Activated CD4-positive, alpha-beta memory T cell treated with anti-CD3 and anti-CD28 coated beads for 36 hours (primary cell): ENCODE measurements at regions of chr2 and their contacts with region 1.

Region 1: DNA sequence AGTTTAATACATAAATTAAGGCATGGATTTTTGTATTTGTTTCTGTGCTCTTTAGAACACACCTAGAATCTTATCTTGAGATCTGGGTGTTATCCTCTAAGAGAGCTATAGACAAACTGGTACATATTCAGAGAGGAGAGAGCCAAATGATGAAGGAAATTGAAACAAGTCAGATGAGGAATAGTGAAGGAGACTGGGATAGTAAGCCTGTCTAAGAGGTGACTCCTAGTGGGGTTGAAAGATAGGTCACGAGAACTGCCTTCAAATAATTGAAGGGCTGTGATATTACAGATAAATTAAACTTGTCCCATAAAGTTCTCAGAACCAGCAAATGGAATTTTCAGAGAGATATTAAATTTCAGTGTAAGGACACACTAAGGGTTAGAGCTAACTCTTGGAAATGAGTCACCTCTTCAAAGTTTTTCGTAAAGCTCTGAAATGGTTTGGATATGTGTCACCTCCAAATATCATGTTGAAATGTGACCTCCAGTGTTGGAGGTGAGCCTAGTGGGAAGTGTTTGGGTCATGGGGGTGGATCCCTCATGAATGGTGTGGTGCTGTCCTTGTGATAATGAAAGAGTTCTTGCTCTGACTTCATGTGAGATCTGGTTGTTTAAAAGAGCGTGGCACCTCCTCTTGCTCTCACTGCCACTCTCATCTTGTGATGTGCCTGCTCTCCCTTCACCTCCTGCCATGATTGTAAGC is 87.2 kb downstream of the BABAM2 start:
- DNase-seq: peak; percentile 75
- H3K4me3 Mint-ChIP-seq: peak overlapping the region; percentile 30
- H3K27ac Mint-ChIP-seq: peak overlapping the region; percentile 87
- H3K4me1 Mint-ChIP-seq: peaks cover 43% of the 10 kb centered on the region
- H3K27me3 Mint-ChIP-seq: no peaks in the 10 kb centered on the region

Region 2: GRCh38 chr2:27901234-27901633 is 76.5 kb before region 1 on chr2:
- CTCF ChIA-PET with region 1: no interaction called
- POLR2A ChIA-PET with region 1: no interaction called
- intact Hi-C with region 1: loop called (anchors 1 kb)
- DNase-seq: peak; percentile 63
- H3K4me3 Mint-ChIP-seq: no peak overlapping the region
- H3K27ac Mint-ChIP-seq: peak overlapping the region; percentile 76
- H3K4me1 Mint-ChIP-seq: peaks cover 78% of the 10 kb centered on the region
- H3K27me3 Mint-ChIP-seq: no peaks in the 10 kb centered on the region

Region 3: GRCh38 chr2:27966483-27966882 is 11.3 kb before region 1 on chr2:
- CTCF ChIA-PET with region 1: interaction called, 6 read pairs
- POLR2A ChIA-PET with region 1: interaction called, 4 read pairs
- intact Hi-C with region 1: loop called (anchors 1 kb)
- DNase-seq: no peak
- H3K4me3 Mint-ChIP-seq: no peak overlapping the region
- H3K27ac Mint-ChIP-seq: no peak overlapping the region
- H3K4me1 Mint-ChIP-seq: peaks cover 59% of the 10 kb centered on the region
- H3K27me3 Mint-ChIP-seq: no peaks in the 10 kb centered on the region

Region 4: DNA sequence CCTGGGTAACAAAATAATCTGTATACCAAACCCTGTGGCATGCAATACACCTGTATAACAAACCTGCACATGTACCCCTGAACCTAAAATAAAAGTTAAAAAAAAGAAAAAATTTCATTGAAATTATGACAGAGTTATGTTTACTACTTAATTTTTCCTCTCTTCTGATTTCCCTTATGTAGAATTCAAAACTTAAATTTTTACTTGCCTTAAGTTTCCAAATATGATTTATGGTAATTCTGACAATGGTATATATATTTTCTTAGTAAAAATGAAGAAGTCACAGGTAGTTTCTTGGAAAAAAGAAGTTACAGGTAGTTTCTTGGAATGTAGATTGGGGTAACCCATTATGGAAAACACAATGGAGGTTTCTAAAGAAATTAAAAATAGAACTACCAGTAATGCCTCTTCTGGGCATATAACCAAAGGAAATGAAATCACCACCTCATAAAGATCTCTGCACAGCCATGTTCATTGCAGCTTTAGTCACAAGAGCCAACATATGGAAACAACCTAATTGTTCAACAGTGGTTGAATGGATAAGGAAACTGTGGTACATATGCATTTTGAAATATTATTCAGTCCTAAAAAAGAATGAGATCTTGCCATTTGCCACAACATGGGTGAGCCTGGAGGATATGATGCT is 77.7 kb after region 1 on chr2:
- CTCF ChIA-PET with region 1: no interaction called
- POLR2A ChIA-PET with region 1: no interaction called
- intact Hi-C with region 1: loop called (anchors 5 kb)
- DNase-seq: no peak
- H3K4me3 Mint-ChIP-seq: no peak overlapping the region
- H3K27ac Mint-ChIP-seq: peak overlapping the region; percentile 82
- H3K4me1 Mint-ChIP-seq: peaks cover 27% of the 10 kb centered on the region
- H3K27me3 Mint-ChIP-seq: no peaks in the 10 kb centered on the region